ENCODE measurements at regions of chrX and their contacts with region 1.

Region 1: DNA sequence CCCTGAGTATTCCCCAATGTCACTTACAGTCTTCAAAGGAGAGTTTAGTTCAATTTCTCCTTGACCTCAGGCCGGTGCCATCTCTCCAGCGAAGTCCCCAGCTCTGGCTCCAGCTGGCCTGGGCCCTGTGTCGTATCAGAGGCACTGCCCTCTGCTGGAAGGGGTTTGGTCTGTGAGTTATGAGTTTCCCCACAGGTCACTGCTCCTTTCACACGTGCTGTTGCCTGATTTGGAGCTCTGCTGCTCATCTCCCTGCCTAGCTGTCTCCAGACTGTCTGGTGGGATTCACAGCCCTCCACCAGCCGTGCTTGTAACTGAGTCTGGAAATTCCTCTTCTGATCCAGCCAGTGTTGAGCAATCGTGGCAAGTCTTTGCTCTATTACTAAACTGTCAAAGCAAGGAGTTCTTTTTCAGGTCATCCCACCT is at the start of gene RAP2C:
- DNase-seq: peak; percentile 33 to 84
- H3K4me3 ChIP-seq: peak within 1 kb of the TSS; percentile 53 to 69
- H3K27ac ChIP-seq: peak within 1 kb of the TSS; percentile 91 to 96
- H3K4me1 ChIP-seq: peaks cover 0 to 6% of the 10 kb centered on the region in 2 donors
- H3K27me3 ChIP-seq: no peaks in the 10 kb centered on the region
- CTCF ChIP-seq: peak; percentile 38 to 59 (median 51)
- total RNA-seq, gene RAP2C: 3.4 TPM

Region 2: GRCh38 chrX:132022967-132023895 is 196.1 kb before region 1 on chrX and contains the start of gene STK26:
- intact Hi-C with region 1: loop called (anchors 5 kb)
- DNase-seq: peak; percentile 19 to 79
- H3K4me3 ChIP-seq: peak within 1 kb of the TSS; percentile 60 to 83
- H3K27ac ChIP-seq: peak within 1 kb of the TSS; percentile 11 to 55
- H3K4me1 ChIP-seq: no peaks in the 10 kb centered on the region
- H3K27me3 ChIP-seq: no peaks in the 10 kb centered on the region
- CTCF ChIP-seq: no peak
- total RNA-seq, gene STK26: 1.8 TPM

Region 3: GRCh38 chrX:132092439-132093065 is 126.8 kb before region 1 on chrX:
- intact Hi-C with region 1: loop called (anchors 2 kb)
- DNase-seq: peak in 1 of 2 donors; percentile 74
- H3K4me3 ChIP-seq: no peak overlapping the region
- H3K27ac ChIP-seq: no peak overlapping the region
- H3K4me1 ChIP-seq: no peaks in the 10 kb centered on the region
- H3K27me3 ChIP-seq: no peaks in the 10 kb centered on the region
- CTCF ChIP-seq: peak; percentile 55 to 76 (median 70)

Region 4: DNA sequence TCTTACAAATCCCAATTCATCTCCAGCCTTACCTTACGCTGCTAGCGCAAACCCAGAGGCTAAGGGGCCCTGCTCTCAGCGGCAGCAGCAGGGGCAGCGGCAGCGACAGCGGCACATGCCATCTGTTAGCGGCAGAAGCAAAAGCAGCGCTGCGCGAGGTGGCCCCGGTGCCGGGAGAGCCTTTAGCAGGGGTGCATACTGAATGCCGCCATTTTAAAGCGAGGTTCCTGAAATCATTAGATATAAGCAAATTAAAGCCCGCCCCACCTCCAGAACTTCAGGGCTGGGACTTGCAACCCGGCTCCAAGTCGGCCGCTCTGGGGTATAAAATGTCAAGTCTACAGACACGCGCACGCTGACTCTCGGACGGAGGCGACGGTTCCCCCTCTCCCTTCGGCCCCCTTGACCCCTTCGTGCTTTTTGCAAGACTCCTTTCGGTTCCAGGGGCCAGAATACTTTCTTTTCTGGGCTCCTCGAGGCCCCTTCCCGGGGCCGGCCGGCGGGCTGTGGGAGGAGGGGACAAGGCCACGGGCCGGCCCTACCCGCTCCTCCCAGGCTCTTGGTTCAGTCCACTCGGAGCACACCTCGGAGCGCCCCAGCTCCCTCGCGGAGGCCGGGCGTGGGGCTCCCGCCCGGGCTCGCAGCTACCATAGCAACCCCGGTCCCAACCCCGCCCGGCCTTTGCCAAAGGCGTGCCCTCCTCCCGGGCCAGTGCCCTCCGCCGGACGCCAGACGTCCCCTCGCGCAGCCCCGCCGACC is 269.6 kb after region 1 on chrX and contains the start of gene MBNL3:
- intact Hi-C with region 1: loop called (anchors 10 kb)
- DNase-seq: peak in 1 of 2 donors; percentile 72
- H3K4me3 ChIP-seq: peak within 1 kb of the TSS; percentile 63 to 82
- H3K27ac ChIP-seq: peak within 1 kb of the TSS; percentile 35 to 68
- H3K4me1 ChIP-seq: no peaks in the 10 kb centered on the region
- H3K27me3 ChIP-seq: no peaks in the 10 kb centered on the region
- CTCF ChIP-seq: no peak
- total RNA-seq, gene MBNL3: 3.1 TPM

Measured in ascending aorta (tissue), 2 donors.